H1 (cell line): ENCODE measurements at regions of chr3 and their contacts with region 1.

Region 1: DNA sequence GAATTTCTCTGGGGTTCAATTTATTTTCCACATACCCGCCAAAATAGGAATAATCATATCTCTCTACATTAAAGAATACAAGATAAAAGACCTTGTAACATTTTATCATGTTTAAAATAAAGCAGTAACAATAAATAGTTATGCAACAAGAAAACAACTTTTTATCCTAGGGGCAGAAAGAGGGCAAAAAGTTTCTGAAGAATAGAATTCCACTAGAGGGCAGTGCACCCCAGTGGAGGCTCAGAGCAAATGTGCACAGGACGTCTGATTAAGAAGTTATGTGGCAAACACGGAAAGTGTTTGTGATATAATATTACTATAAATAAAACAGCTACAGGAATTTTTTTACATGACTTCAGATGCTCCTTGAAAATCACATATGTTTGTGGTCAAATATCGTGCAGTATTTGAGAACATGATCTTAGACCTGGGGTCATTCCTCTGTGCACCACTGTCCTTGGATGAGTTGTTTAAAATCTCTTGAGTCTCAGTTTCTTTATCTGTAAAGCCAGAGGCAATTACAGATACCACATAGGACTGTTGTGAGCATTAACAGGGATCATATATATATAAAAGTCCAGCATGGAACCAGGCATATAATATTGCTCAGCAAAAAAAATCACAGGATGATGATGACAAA is 13.2 kb upstream of the PIK3R4 start:
- DNase-seq: no peak
- H3K4me3 ChIP-seq: no peak overlapping the region
- H3K27ac ChIP-seq: no peak overlapping the region
- H3K4me1 ChIP-seq: no peaks in the 10 kb centered on the region
- H3K27me3 ChIP-seq: no peaks in the 10 kb centered on the region
- CTCF ChIP-seq: peak; percentile 15 to 82 (median 61)
- EP300 ChIP-seq: no peak
- POLR2A ChIP-seq: no peak
- RAD21 ChIP-seq: peak; percentile 90 to 93

Region 2: GRCh38 chr3:130892759-130893375 is 133.0 kb after region 1 on chr3:
- CTCF ChIA-PET with region 1: interaction called, 97 read pairs
- POLR2A ChIA-PET with region 1: interaction called, 6 read pairs
- DNase-seq: no peak
- H3K4me3 ChIP-seq: peak overlapping the region; percentile 78 to 95 (median 86)
- H3K27ac ChIP-seq: no peak overlapping the region; the same call in 1 of the 2 replicates
- H3K4me1 ChIP-seq: peaks cover 0 to 8% (median 4%) of the 10 kb centered on the region in 4 experiments; a peak in 4 of 7 replicates
- H3K27me3 ChIP-seq: no peaks in the 10 kb centered on the region
- CTCF ChIP-seq: peak in 2 of 3 experiments; percentile 68 to 72; a peak in 2 of 4 replicates
- EP300 ChIP-seq: no peak
- POLR2A ChIP-seq: no peak
- RAD21 ChIP-seq: peak; percentile 88 to 89